Activated CD4-positive, alpha-beta memory T cell treated with anti-CD3 and anti-CD28 coated beads, Interleukin-2, amount 10 ng/mL, durations not matched to agents 7 days and 5 days (primary cell): ENCODE measurements at regions of chr10 and their contacts with region 1.

Region 1: GRCh38 chr10:43292755-43293676 is 26.2 kb upstream of the RASGEF1A start:
- DNase-seq: peak; percentile 68
- H3K4me3 Mint-ChIP-seq: peak overlapping the region; percentile 19
- H3K27ac Mint-ChIP-seq: peak overlapping the region; percentile 76
- H3K4me1 Mint-ChIP-seq: peaks cover 85% of the 10 kb centered on the region
- H3K27me3 Mint-ChIP-seq: peaks cover 7% of the 10 kb centered on the region

Region 2: DNA sequence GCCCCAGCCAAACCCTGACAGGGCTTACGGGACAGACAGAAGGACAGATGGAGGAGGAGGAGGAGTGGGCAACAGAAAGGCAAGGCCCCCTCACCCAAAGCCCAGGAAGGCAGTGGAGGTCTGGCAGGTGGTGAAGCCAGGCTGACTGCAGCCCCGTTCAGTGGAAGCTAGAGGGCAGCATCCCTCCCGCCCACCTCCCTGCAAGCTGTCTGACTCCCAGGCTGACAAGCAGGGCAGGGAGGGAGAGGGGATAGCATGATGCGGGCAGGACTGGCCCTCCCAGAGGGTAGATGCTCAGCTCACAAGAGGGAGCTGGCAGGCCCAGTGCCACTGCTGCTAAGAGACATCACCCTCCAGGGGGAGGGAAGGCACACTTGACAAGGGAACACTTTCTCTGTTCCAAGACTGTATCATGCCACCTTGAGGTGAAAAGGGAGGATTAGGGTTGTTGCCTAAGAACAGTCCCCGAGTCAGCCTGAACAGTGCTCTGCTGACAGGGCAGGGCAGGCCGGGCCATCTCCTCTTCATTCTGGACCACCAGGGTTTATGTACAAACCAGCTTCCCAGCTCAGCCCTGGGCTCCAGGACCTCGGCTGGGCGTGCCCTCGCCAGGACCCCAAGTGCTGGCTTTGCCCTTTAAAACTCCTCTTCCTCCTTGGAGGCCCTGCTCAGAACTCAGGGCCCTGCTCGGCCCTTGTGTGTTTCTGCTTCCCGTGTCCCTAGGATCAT is 87.9 kb before region 1 on chr10:
- CTCF ChIA-PET with region 1: interaction called, 21 read pairs
- POLR2A ChIA-PET with region 1: interaction called, 3 read pairs
- DNase-seq: peak; percentile 73
- H3K4me3 Mint-ChIP-seq: no peak overlapping the region
- H3K27ac Mint-ChIP-seq: no peak overlapping the region
- H3K4me1 Mint-ChIP-seq: peaks cover 12% of the 10 kb centered on the region
- H3K27me3 Mint-ChIP-seq: no peaks in the 10 kb centered on the region

Region 3: DNA sequence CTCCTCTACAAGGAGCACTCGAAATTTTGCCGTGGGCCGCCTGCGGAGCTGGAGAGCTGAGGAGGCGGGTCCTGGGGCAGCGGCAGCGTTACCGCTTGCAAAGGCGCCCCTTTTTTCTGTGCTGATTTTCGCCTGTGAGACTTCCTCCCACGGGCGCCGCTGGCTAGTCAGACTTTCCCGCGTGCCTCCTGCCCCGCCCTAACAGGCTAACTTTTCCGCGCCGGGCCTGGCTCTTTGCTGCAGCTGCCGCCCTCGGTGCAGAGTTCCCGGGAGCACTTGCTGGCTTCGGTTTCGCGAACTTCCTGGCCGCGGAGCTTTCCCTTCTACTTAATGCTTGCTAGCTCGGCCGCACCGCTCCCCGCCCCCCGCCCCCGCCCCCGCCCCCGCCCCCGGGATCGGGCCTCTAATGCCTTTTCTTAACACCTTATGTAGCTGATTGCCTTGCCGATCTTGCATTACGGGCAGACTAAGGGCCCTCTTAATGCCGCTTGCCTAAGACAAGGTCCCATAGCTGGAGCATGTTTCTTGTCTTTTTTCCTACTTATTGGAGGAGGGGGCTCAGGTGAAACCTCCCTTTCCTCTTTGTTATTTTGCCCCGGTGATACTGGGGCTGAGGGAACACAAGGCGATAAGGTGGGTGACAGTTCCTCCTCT is 11.8 kb after region 1 on chr10:
- CTCF ChIA-PET with region 1: interaction called, 14 read pairs
- POLR2A ChIA-PET with region 1: interaction called, 28 read pairs
- DNase-seq: peak; percentile 65
- H3K4me3 Mint-ChIP-seq: peak overlapping the region; percentile 65
- H3K27ac Mint-ChIP-seq: peak overlapping the region; percentile 56
- H3K4me1 Mint-ChIP-seq: peaks cover 59% of the 10 kb centered on the region
- H3K27me3 Mint-ChIP-seq: peaks cover 16% of the 10 kb centered on the region

Region 4: GRCh38 chr10:43322769-43323168 is 29.8 kb after region 1 on chr10:
- CTCF ChIA-PET with region 1: interaction called, 15 read pairs
- POLR2A ChIA-PET with region 1: interaction called, 4 read pairs
- DNase-seq: peak; percentile 92
- H3K4me3 Mint-ChIP-seq: peak overlapping the region; percentile 31
- H3K27ac Mint-ChIP-seq: no peak overlapping the region
- H3K4me1 Mint-ChIP-seq: peaks cover 46% of the 10 kb centered on the region
- H3K27me3 Mint-ChIP-seq: peaks cover 7% of the 10 kb centered on the region

Region 5: GRCh38 chr10:43461950-43462349 is 168.9 kb after region 1 on chr10:
- CTCF ChIA-PET with region 1: interaction called, 13 read pairs
- POLR2A ChIA-PET with region 1: no interaction called
- DNase-seq: no peak
- H3K4me3 Mint-ChIP-seq: no peak overlapping the region
- H3K27ac Mint-ChIP-seq: no peak overlapping the region
- H3K4me1 Mint-ChIP-seq: peaks cover 16% of the 10 kb centered on the region
- H3K27me3 Mint-ChIP-seq: no peaks in the 10 kb centered on the region